ENCODE measurements at regions of chr7 and their contacts with region 1.

Region 1: DNA sequence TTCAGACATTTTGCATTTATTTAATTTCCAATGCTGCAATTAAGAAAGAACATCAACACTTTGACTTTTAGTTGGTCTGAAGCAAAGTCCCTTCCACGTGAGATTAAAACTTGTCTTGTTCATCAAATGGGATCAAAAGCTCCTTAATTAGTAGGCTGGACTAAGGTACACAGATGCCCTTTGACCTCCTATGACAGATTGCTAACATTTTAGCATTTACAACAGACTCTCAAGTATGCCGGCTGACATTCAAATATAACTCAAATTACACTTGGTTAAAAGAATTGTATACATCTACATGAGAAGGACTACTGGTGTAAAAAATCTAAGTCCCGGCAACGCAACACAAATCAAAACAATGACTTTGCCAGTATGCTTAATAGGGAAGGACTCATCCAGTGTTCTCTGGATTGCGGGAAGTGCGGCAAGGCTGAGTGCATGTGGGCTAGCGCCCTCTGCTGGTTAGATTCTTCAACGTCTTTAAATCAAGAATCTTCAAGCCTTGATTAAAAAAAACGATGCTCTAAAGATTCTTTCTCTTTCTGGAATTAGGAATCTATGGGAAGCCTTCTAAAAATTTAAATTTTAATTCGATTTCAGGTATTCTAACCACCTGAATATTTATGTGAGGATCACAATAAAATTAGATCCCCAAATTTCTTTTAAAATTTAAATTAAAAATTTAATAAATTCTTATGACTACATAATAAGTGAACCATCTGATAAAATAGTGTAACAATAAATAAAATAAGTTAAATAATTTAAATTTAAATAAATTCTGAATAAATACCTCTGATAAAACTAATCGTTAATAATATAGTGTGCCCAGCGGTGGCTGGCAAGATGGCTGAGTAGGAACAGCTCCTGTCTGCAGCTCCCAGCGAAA is 444.7 kb downstream of the DGKB start:
- DNase-seq: peak; percentile 53
- H3K4me3 ChIP-seq: peak overlapping the region; percentile 6 to 9; a peak in 1 of 4 replicates
- H3K27ac ChIP-seq: no peak overlapping the region; a peak in 1 of 4 replicates
- H3K4me1 ChIP-seq: no peaks in the 10 kb centered on the region; a peak in 1 of 4 replicates
- H3K27me3 ChIP-seq: no peaks in the 10 kb centered on the region
- CTCF ChIP-seq: peak; percentile 98
- EP300 ChIP-seq: no peak
- RAD21 ChIP-seq: peak; percentile 98

Region 2: DNA sequence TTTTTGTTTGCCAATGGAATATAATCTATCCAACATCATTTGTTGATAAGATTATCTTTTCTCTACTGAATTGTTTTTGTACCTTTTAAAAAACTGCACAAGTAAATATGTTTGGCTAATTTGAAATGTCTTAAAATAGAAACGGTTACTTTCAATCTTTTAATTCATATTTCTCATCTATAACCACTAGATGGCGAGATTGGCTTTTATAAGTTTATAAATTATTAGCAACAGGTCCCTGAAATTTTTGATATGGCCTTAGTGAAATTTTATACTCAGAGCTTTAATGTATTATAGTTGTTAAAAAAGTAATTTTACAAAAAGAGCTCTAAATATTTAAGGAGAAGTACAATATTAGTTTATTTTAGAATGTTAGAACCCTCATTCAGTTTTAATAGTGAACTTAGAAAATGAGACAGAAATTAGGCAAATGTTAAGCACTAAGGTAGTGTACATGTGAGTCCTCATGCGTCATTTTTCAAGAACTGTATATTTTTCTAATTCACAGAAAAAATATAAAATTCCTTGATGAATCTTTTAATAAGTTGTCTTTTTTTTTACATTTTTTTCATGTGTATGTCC is 1177.9 kb before region 1 on chr7:
- CTCF ChIA-PET with region 1: interaction called, 23 read pairs
- POLR2A ChIA-PET with region 1: no interaction called
- DNase-seq: peak; percentile 23
- H3K4me3 ChIP-seq: no peak overlapping the region
- H3K27ac ChIP-seq: no peak overlapping the region
- H3K4me1 ChIP-seq: no peaks in the 10 kb centered on the region
- H3K27me3 ChIP-seq: no peaks in the 10 kb centered on the region; the same call in 1 of the 2 replicates
- CTCF ChIP-seq: peak; percentile 79
- EP300 ChIP-seq: no peak
- RAD21 ChIP-seq: peak; percentile 73

Region 3: GRCh38 chr7:13476881-13477444 is 980.8 kb before region 1 on chr7:
- CTCF ChIA-PET with region 1: interaction called, 10 read pairs
- POLR2A ChIA-PET with region 1: no interaction called
- DNase-seq: no peak
- H3K4me3 ChIP-seq: no peak overlapping the region
- H3K27ac ChIP-seq: no peak overlapping the region
- H3K4me1 ChIP-seq: no peaks in the 10 kb centered on the region
- H3K27me3 ChIP-seq: no peaks in the 10 kb centered on the region
- CTCF ChIP-seq: peak; percentile 32
- EP300 ChIP-seq: no peak
- RAD21 ChIP-seq: peak; percentile 36

Region 4: GRCh38 chr7:13524076-13524475 is 933.7 kb before region 1 on chr7:
- CTCF ChIA-PET with region 1: interaction called, 10 read pairs
- POLR2A ChIA-PET with region 1: no interaction called
- DNase-seq: no peak
- H3K4me3 ChIP-seq: no peak overlapping the region
- H3K27ac ChIP-seq: no peak overlapping the region
- H3K4me1 ChIP-seq: peaks cover 0 to 2% of the 10 kb centered on the region in 2 experiments; a peak in 1 of 4 replicates
- H3K27me3 ChIP-seq: no peaks in the 10 kb centered on the region
- CTCF ChIP-seq: no peak
- EP300 ChIP-seq: no peak
- RAD21 ChIP-seq: no peak

Region 5: GRCh38 chr7:14419531-14419930 is 38.3 kb before region 1 on chr7:
- CTCF ChIA-PET with region 1: no interaction called
- POLR2A ChIA-PET with region 1: no interaction called
- DNase-seq: no peak
- H3K4me3 ChIP-seq: no peak overlapping the region
- H3K27ac ChIP-seq: no peak overlapping the region
- H3K4me1 ChIP-seq: peaks cover 0 to 4% of the 10 kb centered on the region in 2 experiments; a peak in 2 of 4 replicates
- H3K27me3 ChIP-seq: no peaks in the 10 kb centered on the region
- CTCF ChIP-seq: no peak
- EP300 ChIP-seq: no peak
- RAD21 ChIP-seq: no peak

Region 6: DNA sequence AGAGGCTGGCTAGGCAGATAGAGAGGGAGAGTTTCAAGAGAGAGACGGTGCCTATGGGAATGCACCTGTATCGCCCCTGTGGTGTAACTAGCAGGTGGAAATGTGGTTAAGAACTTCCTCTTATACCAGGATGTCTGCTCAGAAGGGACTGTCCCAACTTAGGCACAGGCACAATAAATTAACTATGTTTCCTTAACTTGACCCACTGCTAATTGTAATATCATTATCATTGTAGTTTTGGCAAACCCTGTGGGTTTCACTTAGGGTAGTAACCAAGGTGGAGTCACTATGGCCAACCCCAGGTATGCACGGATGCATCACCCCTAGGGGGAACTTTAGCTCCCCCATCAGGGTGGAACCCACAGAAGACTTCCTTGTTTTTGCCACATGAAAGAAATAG is 11.0 kb before region 1 on chr7:
- CTCF ChIA-PET with region 1: interaction called, 17 read pairs
- POLR2A ChIA-PET with region 1: no interaction called
- DNase-seq: no peak
- H3K4me3 ChIP-seq: no peak overlapping the region
- H3K27ac ChIP-seq: no peak overlapping the region
- H3K4me1 ChIP-seq: no peaks in the 10 kb centered on the region
- H3K27me3 ChIP-seq: no peaks in the 10 kb centered on the region
- CTCF ChIP-seq: no peak
- EP300 ChIP-seq: no peak
- RAD21 ChIP-seq: no peak

Measured in SK-N-SH (cell line).